ENCODE measurements at regions of chr11 and their contacts with region 1.

Region 1: GRCh38 chr11:117232092-117232878 is at the start of gene RNF214:
- DNase-seq: peak; percentile 83 to 91 (median 85)
- ATAC-seq: peak; percentile 47 to 91 (median 84)
- H3K4me3 ChIP-seq: peak within 1 kb of the TSS; percentile 78 to 99 (median 93)
- H3K27ac ChIP-seq: peak within 1 kb of the TSS; percentile 91 to 100 (median 98)
- H3K4me1 ChIP-seq: peaks cover 2 to 38% (median 25%) of the 10 kb centered on the region in 12 donors
- H3K27me3 ChIP-seq: no peaks in the 10 kb centered on the region
- CTCF ChIP-seq: peak; percentile 69 to 100 (median 94)
- POLR2A ChIP-seq: peak; percentile 57 to 71
- total RNA-seq, gene RNF214: 16.1 to 31.9 (median 23.4) TPM

Region 2: GRCh38 chr11:116787786-116788486 is 444.3 kb before region 1 on chr11 and contains the start of gene ZPR1:
- intact Hi-C with region 1: loop called in 8 of 10 experiments (anchors 2 to 10 kb)
- DNase-seq: peak; percentile 85 to 92 (median 88)
- ATAC-seq: peak; percentile 80 to 90 (median 88)
- H3K4me3 ChIP-seq: peak within 1 kb of the TSS; percentile 74 to 99 (median 96)
- H3K27ac ChIP-seq: peak within 1 kb of the TSS; percentile 61 to 93 (median 84)
- H3K4me1 ChIP-seq: peaks cover 0 to 31% (median 16%) of the 10 kb centered on the region in 12 donors
- H3K27me3 ChIP-seq: no peaks in the 10 kb centered on the region
- CTCF ChIP-seq: no peak
- POLR2A ChIP-seq: peak in 1 of 2 donors; percentile 66
- total RNA-seq, gene ZPR1: 9.7 to 48.7 (median 27.1) TPM

Region 3: DNA sequence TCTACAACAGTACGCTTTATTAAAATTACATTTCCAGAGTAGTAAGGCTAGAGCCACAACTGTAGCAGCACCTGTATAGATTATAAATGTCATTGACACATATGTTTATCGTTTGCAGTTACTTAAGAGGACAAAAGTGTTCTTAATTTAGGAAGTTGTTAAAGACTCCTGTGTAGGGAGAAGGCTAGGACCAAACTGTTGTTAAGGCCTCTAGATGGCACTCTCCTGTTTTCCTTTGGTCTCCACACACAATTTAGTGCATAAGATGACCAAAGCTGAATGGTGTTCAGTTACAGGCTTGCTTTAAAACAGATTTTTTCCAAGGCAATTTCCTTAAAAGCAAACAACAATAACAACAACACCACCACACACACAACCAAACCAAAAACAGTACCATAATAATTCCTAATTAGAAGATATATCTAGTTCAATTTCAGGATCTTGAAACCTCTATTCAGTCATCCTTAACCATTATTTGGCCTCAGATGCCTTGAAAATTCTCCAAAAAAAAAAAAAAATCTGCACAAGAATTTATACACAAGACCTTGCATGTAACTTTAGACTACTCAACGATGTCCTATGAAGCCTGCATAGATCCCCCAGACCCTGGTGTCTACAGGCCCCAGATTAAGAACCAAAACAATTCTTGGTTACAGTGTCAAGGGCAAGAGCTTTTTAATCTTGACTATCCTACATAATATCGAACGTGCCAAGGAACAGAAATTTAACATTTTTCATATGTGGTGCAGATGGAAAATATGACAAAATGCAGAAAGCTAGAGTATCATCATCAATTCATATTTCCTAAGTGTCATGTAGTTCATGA is 352.3 kb before region 1 on chr11:
- intact Hi-C with region 1: loop called in 9 of 10 experiments (anchors 2 to 10 kb)
- DNase-seq: no peak
- ATAC-seq: peak; percentile 67 to 90 (median 85)
- H3K4me3 ChIP-seq: no peak overlapping the region
- H3K27ac ChIP-seq: no peak overlapping the region
- H3K4me1 ChIP-seq: peaks cover 0 to 32% (median 2%) of the 10 kb centered on the region in 12 donors
- H3K27me3 ChIP-seq: no peaks in the 10 kb centered on the region
- CTCF ChIP-seq: peak; percentile 52 to 81 (median 66)
- POLR2A ChIP-seq: no peak

Region 4: DNA sequence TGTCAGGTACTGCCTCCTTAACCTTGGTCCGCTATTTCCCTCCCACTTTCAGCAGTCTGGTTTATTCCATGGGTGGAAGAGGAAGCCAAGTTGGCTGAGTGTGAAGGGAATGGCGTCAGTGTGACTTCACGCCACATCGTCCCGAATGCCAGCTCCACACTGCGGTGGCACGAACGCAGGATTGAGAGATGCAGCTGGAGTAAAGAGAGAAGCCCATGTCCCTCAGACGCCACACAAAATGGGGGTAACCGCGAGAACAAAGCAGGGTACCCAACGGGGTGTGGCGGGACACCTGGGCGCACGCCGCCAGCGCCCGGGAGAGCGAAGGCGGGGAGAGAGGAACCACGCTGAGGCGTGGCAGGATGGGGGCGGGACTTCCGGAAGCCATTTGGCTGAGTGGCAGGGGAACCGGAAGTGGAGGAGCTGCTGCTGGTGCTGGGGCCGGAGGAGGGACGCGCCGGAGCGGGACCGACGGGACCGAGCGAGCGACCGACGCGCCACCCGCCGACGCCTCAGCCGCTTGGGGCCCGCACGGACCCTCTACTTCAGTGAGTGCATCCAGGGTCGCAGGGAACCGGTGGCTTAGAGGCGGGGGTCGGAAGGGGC is 88.3 kb before region 1 on chr11 and contains the start of gene PAFAH1B2:
- intact Hi-C with region 1: loop called in 1 of 10 experiments (anchors 2 kb)
- DNase-seq: peak; percentile 97 to 98 (median 97)
- ATAC-seq: peak; percentile 90 to 98 (median 97)
- H3K4me3 ChIP-seq: peak within 1 kb of the TSS; percentile 62 to 99 (median 84)
- H3K27ac ChIP-seq: peak within 1 kb of the TSS; percentile 86 to 97 (median 94)
- H3K4me1 ChIP-seq: peaks cover 0 to 46% (median 30%) of the 10 kb centered on the region in 12 donors
- H3K27me3 ChIP-seq: no peaks in the 10 kb centered on the region
- CTCF ChIP-seq: no peak
- POLR2A ChIP-seq: peak in 1 of 2 donors; percentile 83
- total RNA-seq, gene PAFAH1B2: 46.8 to 81.1 (median 68.8) TPM

Region 5: DNA sequence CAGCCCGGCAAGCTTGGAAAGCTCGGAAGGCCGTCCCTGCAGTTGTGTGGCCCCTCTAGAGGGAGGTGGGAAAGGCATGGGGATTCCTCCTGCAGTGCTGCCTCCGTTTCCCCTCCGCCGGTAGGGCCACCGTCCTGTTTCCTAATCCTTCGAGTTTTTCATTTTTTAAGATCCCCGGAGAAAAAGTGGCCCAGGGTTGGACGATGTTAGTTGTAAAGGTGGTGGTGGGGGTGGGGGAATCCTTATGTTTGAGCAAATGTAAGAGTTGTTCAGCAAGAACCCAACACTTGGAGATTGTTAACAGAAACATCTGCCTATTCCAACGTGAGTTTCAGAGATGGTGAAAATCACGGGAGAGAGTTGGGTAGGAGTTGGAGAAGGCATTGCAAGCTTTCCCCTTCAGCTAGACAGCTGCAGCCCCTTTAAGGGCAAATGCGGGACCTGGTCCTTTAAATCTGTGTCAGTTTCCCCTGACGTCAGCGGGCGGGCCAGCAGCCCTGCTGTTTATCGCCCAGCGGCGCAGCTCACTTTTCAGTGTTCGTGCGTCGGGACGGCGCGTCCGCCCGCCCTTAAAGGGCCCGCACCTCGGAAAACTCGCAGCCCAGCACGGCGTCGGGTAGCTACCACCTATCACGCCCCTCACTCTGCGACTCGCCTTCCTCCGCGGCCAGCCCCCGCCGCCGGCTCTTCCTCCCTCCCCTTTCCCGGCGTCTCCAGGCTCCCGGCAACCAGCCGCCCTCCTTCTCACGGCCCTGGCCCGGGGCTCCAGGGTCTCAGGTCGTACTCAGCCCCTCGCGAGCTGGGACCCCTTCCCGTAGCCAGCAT is 53.9 kb before region 1 on chr11 and contains the start of gene SIDT2:
- intact Hi-C with region 1: loop called in 3 of 10 experiments (anchors 2 to 5 kb)
- DNase-seq: peak; percentile 96 to 98 (median 96)
- ATAC-seq: peak; percentile 93 to 96 (median 96)
- H3K4me3 ChIP-seq: peak within 1 kb of the TSS; percentile 75 to 96 (median 91)
- H3K27ac ChIP-seq: peak within 1 kb of the TSS; percentile 77 to 98 (median 96)
- H3K4me1 ChIP-seq: peaks cover 0 to 43% (median 33%) of the 10 kb centered on the region in 12 donors
- H3K27me3 ChIP-seq: no peaks in the 10 kb centered on the region
- CTCF ChIP-seq: no peak
- POLR2A ChIP-seq: peak; percentile 90 to 96
- total RNA-seq, gene SIDT2: 17.2 to 45.5 (median 22.2) TPM

Region 6: DNA sequence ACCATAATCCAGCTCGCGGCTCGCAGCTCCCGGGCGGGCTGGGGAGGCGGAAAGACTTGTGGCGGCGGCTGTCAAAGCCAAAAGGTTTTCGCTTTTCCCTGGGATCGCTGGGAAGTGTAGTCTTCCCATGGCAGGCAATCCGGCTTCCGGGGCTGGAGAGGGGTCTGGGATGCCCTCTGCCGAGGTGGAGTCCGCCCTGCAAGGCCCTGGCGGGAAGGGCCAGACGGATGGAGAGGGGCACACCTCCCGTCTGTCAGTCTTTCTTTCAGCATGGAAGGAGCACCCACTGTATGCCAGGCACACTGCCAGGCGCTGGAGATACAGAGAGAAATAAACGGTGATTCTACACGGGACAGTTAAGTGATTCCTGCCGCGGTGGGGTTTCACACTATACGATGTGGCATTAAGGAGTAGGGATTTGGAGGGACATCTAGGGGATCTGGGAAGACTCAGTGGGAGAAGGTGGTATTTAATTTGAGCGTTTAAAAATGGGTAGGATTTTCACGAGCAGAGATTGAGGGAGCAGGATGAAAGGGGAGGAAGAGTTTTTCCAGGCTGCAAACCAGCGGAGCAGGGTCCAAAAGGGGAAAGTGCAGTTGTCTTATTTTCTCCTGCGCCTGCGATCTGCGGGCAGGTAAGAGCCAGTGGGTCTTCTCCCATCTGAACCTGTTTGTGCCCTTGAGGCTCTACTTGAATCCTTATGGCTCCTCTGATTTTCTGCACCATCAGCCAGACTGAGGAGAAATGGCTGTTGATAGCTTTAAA is 84.1 kb after region 1 on chr11 and contains the start of gene BACE1:
- intact Hi-C with region 1: loop called in 1 of 10 experiments (anchors 5 kb)
- DNase-seq: peak; percentile 88 to 92 (median 89)
- ATAC-seq: peak; percentile 90 to 98 (median 96)
- H3K4me3 ChIP-seq: peak within 1 kb of the TSS; percentile 78 to 99 (median 91)
- H3K27ac ChIP-seq: peak within 1 kb of the TSS in 11 of 12 donors; percentile 26 to 76 (median 63)
- H3K4me1 ChIP-seq: peaks cover 0 to 28% (median 19%) of the 10 kb centered on the region in 12 donors
- H3K27me3 ChIP-seq: no peaks in the 10 kb centered on the region
- CTCF ChIP-seq: peak in 9 of 12 donors; percentile 19 to 68 (median 44)
- POLR2A ChIP-seq: peak in 1 of 2 donors; percentile 58
- total RNA-seq, gene BACE1: 12.7 to 21.4 (median 17.3) TPM

Region 7: DNA sequence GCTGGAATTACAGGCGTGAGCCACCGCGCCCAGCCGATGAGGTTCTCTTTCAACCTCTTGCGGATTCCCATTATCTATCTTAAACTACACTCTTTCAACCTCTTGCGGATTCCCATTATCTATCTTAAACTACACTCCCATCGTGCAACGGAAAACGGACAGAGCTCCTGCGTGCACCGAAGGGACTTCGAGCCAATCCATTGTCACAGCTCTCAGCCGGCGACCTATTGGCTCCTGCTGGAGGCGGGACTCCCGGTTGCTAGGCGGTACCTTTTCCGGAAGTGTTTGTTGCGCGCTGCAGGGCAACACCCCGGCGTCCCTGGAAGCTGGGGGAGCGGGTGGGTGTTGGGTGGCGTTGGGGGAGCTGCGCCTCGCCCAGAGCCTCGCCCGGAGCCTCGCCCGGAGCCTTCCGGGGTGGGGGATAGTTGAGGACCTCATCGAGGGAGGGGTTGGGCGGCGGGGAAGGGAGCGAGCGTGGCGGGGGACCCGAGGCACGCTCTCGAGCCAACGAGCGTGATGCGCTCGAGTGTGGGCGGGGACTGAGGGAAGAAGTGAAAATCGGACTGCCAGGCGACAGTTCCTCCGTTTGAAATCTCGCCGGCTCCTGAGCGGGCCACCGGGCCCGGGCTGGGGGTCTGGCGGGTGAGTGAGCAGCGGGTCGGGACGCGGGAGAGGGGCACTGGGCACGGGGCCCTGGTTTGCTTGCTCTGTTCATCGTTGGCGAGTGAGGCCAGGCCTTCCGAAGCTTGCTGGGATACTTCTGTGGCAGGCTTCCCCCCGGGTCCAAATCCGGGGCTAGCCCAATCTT is 95.5 kb after region 1 on chr11 and contains the start of gene CEP164:
- intact Hi-C with region 1: loop called in 1 of 10 experiments (anchors 2 kb)
- DNase-seq: peak; percentile 96 to 98 (median 97)
- ATAC-seq: peak; percentile 96 to 99 (median 97)
- H3K4me3 ChIP-seq: peak within 1 kb of the TSS; percentile 49 to 90 (median 71)
- H3K27ac ChIP-seq: peak within 1 kb of the TSS; percentile 28 to 95 (median 90)
- H3K4me1 ChIP-seq: peaks cover 0 to 20% (median 9%) of the 10 kb centered on the region in 12 donors
- H3K27me3 ChIP-seq: no peaks in the 10 kb centered on the region
- CTCF ChIP-seq: no peak
- POLR2A ChIP-seq: peak in 1 of 2 donors; percentile 68
- total RNA-seq, gene CEP164: 2.6 to 15.4 (median 7.3) TPM

Measured in heart left ventricle (tissue), 16 donors.